Activated CD8-positive, alpha-beta memory T cell treated with anti-CD3 and anti-CD28 coated beads, Interleukin-2, amount 10 ng/mL, durations not matched to agents 7 days and 5 days (primary cell): ENCODE measurements at regions of chr3 and their contacts with region 1.

Region 1: DNA sequence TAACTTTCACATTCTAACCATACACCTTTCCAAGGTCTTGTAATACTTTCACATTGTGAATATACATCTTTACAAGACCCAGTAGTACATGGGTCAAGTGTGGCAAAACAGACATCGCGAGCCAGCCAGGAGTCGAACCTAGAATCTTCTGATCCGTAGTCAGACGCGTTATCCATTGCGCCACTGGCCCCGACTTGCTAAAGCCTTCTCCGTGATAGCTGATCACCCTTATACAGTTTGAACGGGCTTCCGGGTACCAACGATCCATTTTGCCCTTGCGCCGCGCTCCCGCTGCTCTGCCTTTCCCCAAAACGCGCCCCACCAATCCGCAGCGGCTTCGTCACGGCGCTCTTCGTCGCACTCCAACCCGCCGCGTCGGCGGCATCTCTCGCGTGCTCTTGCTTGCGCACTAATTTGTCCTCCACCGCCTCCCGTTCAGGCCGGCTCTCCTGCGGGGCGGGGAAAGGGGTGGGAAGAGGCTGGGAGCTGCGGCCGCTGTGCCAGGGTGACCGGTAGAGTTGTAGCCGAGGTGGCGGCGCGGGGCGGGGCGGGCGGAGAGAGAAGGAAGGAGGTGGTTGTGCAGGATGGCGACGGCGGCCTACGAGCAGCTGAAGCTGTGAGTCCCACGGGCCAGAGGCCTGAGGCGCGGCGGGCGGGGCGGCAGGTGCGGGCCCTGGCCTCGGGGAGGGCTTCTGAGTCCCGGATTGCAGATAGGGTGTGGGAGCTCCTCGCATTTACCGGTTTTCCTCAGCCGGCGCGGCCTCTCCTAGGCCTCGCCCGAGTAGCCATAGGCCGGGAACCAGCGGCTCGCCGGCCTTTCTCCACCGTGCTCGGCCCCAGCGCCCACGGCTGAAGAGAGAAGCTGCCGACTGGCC is at the start of gene SACM1L:
- DNase-seq: peak; percentile 98
- ATAC-seq: peak; percentile 88
- H3K4me3 Mint-ChIP-seq: peak within 1 kb of the TSS; percentile 81
- H3K27ac Mint-ChIP-seq: peak within 1 kb of the TSS; percentile 87
- H3K4me1 Mint-ChIP-seq: peaks cover 40% of the 10 kb centered on the region
- H3K27me3 Mint-ChIP-seq: peaks cover 3% of the 10 kb centered on the region
- total RNA-seq, gene SACM1L: 71.6 to 88.7 TPM

Region 2: DNA sequence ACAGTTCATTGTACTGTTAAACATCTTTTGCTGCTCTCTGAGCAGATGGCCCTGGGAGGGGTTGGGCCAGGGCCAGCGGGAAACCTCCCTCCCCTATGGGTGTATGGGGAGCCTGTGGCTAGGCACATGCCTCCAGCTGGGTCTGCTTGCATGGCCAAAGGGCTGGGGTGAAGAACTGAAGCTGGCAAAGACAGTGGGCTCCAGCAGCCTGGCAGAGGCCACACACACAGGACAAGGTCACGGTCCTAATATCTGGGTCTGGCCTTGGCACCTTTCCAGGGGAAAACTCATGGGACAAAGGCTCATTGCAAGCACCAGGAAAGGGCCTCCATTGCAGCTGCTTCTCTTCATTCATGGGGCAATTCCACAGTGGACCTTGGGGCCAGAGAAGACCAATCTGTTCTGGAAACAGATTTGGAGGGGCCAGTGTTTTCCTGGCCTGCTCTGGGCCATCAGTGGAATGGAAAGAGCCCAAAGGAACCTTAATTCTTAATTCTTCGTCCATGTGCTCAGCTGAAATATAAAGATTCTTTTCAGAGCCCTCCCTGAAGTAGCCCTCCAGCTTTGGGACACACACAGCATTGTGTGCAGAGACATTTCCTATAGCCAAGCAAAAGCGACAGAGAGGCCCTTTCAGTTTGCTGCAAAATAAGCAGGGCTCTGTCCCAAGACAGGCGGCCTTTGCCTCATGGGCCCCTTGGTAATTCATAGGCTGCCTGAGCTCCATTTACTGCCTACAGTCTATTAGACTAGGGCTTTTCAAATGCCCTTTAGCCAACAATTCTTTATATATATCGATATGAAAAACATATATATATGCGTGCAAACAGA is 105.9 kb before region 1 on chr3:
- CTCF ChIA-PET with region 1: no interaction called
- DNase-seq: no peak
- ATAC-seq: no peak
- H3K4me3 Mint-ChIP-seq: no peak overlapping the region
- H3K27ac Mint-ChIP-seq: no peak overlapping the region
- H3K4me1 Mint-ChIP-seq: no peaks in the 10 kb centered on the region
- H3K27me3 Mint-ChIP-seq: no peaks in the 10 kb centered on the region

Region 3: GRCh38 chr3:45665101-45665572 is 24.0 kb before region 1 on chr3:
- CTCF ChIA-PET with region 1: interaction called, 29 read pairs
- DNase-seq: peak; percentile 77
- ATAC-seq: peak; percentile 50
- H3K4me3 Mint-ChIP-seq: peak overlapping the region; percentile 78
- H3K27ac Mint-ChIP-seq: peak overlapping the region; percentile 88
- H3K4me1 Mint-ChIP-seq: peaks cover 56% of the 10 kb centered on the region
- H3K27me3 Mint-ChIP-seq: no peaks in the 10 kb centered on the region

Region 4: DNA sequence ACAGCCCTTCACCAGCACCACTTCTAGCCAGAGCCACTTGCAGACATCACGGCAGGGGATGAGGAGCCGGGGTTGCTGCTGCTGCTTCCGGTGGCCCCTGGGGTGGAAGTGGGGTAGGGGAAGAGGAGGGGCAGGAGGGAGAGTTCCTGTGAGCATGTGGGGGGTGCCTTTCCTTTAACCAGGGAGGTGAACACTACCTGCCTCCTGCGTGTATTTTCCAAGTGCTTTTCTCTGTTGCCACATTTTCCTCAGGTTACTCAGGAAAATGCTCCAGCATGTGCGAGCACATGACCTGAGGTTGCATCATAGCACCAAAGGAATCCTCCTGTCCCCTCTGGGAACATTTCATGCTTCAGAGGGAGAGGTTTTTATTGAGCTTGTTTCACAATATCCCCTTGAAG is 12.1 kb before region 1 on chr3:
- CTCF ChIA-PET with region 1: interaction called, 12 read pairs
- DNase-seq: peak; percentile 83
- ATAC-seq: peak; percentile 92
- H3K4me3 Mint-ChIP-seq: peak overlapping the region; percentile 59
- H3K27ac Mint-ChIP-seq: peak overlapping the region; percentile 94
- H3K4me1 Mint-ChIP-seq: peaks cover 24% of the 10 kb centered on the region
- H3K27me3 Mint-ChIP-seq: no peaks in the 10 kb centered on the region

Region 5: GRCh38 chr3:45705839-45706808 is 17.0 kb after region 1 on chr3:
- CTCF ChIA-PET with region 1: interaction called, 12 read pairs
- DNase-seq: no peak
- ATAC-seq: peak; percentile 20
- H3K4me3 Mint-ChIP-seq: no peak overlapping the region
- H3K27ac Mint-ChIP-seq: peak overlapping the region; percentile 64
- H3K4me1 Mint-ChIP-seq: peaks cover 19% of the 10 kb centered on the region
- H3K27me3 Mint-ChIP-seq: no peaks in the 10 kb centered on the region

Region 6: GRCh38 chr3:45986303-45986982 is 297.3 kb after region 1 on chr3:
- CTCF ChIA-PET with region 1: no interaction called
- DNase-seq: no peak
- ATAC-seq: no peak
- H3K4me3 Mint-ChIP-seq: no peak overlapping the region
- H3K27ac Mint-ChIP-seq: no peak overlapping the region
- H3K4me1 Mint-ChIP-seq: peaks cover 89% of the 10 kb centered on the region
- H3K27me3 Mint-ChIP-seq: no peaks in the 10 kb centered on the region